ENCODE measurements at regions of chr12 and their contacts with region 1.

Region 1: DNA sequence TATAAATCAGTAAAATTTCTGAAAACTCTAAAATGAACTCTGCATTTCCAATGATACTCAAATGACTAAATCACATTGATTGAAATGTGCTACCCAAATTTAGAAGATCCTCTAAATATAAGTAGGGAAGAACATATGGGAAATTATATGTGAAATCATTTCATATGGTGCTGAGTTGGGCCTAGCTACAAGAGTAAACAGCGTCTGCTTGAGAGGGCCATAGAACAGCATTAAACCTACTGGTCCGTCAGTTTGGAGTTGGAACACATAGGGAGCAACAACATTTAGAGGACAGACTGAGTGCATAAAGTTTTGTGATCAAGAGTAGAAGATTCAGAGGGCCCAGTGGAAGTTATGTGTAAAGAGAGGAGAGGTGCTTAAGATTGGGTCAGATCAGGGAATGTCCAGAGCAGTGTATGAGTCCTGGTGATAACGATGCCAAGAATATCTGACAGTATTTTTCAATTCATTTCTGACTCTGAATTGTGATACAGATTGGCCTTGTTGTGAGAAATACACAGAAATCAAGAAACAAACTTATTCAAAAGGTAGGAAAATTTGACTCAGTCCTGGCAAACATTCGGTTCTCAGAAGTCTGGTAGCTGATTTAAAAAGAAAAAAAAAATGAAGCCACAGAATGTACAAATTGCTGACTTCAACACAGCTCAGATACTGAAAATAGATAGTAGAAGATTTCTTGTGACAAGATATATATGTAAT is 362.2 kb downstream of the CCDC91 start:
- DNase-seq: no peak
- H3K4me3 Mint-ChIP-seq: no peak overlapping the region
- H3K27ac Mint-ChIP-seq: peak overlapping the region; percentile 78
- H3K4me1 Mint-ChIP-seq: peaks cover 9% of the 10 kb centered on the region
- H3K27me3 Mint-ChIP-seq: no peaks in the 10 kb centered on the region

Region 2: DNA sequence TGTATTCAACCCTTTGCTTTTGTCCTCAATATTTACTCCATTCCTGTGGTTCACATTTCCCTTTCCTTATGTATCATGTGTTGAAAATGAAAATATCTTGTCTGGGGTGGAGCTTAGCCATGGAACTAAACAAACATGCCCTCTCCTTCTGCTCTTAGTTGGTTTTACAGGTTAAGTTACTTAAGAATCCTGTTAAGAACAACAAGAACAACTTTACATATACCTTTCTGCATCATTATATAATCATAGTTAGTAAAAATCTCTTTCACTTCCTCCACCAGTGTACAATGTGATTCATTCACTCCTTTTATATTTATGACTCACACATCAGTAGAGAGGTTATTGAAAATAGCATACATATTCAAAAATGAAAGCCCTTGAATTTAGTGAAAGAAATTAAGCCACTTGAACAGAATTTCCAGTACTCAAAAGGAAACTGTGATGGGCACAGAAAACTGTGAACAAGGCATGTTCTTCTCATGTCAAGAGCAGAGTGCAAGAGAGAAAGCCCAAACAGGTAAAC is 54.5 kb before region 1 on chr12:
- intact Hi-C with region 1: loop called (anchors 1 kb)
- DNase-seq: no peak
- H3K4me3 Mint-ChIP-seq: no peak overlapping the region
- H3K27ac Mint-ChIP-seq: no peak overlapping the region
- H3K4me1 Mint-ChIP-seq: peaks cover 12% of the 10 kb centered on the region
- H3K27me3 Mint-ChIP-seq: no peaks in the 10 kb centered on the region

Region 3: DNA sequence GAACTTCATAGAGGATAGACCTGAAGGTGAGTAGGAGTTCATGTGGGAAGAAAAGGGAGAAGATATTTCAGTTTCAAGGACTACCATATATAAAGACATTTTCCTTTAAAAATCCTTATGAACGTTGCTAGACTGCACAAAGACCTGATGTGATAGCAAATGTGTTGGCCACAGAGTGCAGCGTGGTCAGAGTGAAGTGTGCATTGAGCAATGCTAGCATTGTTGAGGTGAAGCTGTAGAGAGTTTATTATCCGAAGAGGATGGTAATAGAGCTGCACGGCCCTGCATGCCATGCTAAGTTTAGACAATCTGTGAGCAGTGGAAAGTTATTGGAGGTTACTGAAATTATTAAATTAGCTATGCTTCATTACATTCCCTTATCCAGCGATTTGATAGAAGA is 50.8 kb after region 1 on chr12:
- intact Hi-C with region 1: no loop called
- DNase-seq: no peak
- H3K4me3 Mint-ChIP-seq: no peak overlapping the region
- H3K27ac Mint-ChIP-seq: no peak overlapping the region
- H3K4me1 Mint-ChIP-seq: no peaks in the 10 kb centered on the region
- H3K27me3 Mint-ChIP-seq: no peaks in the 10 kb centered on the region

Region 4: DNA sequence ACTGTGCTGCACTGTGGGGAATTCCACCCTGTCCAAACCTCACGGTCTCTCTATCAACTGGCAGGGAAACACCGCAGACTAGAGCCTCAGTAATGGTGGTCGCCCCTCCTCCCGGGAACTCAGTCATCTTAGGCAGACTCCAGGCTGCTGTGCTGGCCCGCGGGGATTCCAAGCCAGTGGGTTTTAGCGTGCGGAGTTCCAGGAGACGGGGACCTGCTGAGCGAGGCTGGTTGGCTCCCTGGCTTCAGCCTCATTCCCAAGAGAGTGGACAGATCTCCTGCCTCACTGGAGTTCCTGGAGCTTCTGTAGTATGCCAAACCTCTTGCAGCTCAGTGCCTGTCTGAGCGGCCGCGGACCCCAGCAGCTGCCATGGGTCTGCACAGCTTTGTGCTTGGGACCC is 93.5 kb after region 1 on chr12:
- intact Hi-C with region 1: no loop called
- DNase-seq: no peak
- H3K4me3 Mint-ChIP-seq: no peak overlapping the region
- H3K27ac Mint-ChIP-seq: no peak overlapping the region
- H3K4me1 Mint-ChIP-seq: no peaks in the 10 kb centered on the region
- H3K27me3 Mint-ChIP-seq: no peaks in the 10 kb centered on the region

Measured in activated T-helper 1 cell treated with anti-CD3 and anti-CD28 coated beads, Interleukin-12 subunit alpha, Interleukin-12 subunit beta, Interleukin-2, Interleukin-4 antibody, amounts not matched to agents 30 ng/mL and 10 ng/mL and 1 ng/mL, durations not matched to agents 14 hours and 24 hours and 36 hours (primary cell).